K562 (cell line): ENCODE measurements at regions of chr2 and their contacts with region 1.

Region 1: GRCh38 chr2:108607706-108608301 is 73.5 kb downstream of the LIMS1 start:
- DNase-seq: peak; percentile 45 to 74 (median 46)
- ATAC-seq: peak; percentile 76
- H3K4me3 ChIP-seq: no peak overlapping the region
- H3K27ac ChIP-seq: no peak overlapping the region; the same call in 2 of the 3 replicates
- H3K4me1 ChIP-seq: peaks cover 15 to 26% of the 10 kb centered on the region in 2 experiments
- H3K27me3 ChIP-seq: no peaks in the 10 kb centered on the region
- CTCF ChIP-seq: peak; percentile 66 to 82 (median 76)
- EP300 ChIP-seq: no peak
- POLR2A ChIP-seq: no peak
- RAD21 ChIP-seq: peak; percentile 76 to 82

Region 2: GRCh38 chr2:107738266-107738665 is 869.5 kb before region 1 on chr2:
- CTCF ChIA-PET with region 1: no interaction called
- POLR2A ChIA-PET with region 1: no interaction called
- in situ Hi-C with region 1: no loop called
- intact Hi-C with region 1: loop called (anchors 10 kb)
- DNase-seq: no peak
- ATAC-seq: no peak
- H3K4me3 ChIP-seq: no peak overlapping the region
- H3K27ac ChIP-seq: no peak overlapping the region
- H3K4me1 ChIP-seq: peaks cover 0 to 29% of the 10 kb centered on the region in 2 experiments; a peak in 3 of 5 replicates
- H3K27me3 ChIP-seq: no peaks in the 10 kb centered on the region
- CTCF ChIP-seq: no peak
- EP300 ChIP-seq: no peak
- POLR2A ChIP-seq: peak; percentile 5; the same call in 1 of the 2 replicates
- RAD21 ChIP-seq: no peak

Region 3: GRCh38 chr2:108492364-108492763 is 115.4 kb before region 1 on chr2:
- CTCF ChIA-PET with region 1: no interaction called
- POLR2A ChIA-PET with region 1: no interaction called
- in situ Hi-C with region 1: no loop called
- intact Hi-C with region 1: no loop called
- DNase-seq: no peak
- ATAC-seq: no peak
- H3K4me3 ChIP-seq: no peak overlapping the region
- H3K27ac ChIP-seq: no peak overlapping the region
- H3K4me1 ChIP-seq: no peaks in the 10 kb centered on the region
- H3K27me3 ChIP-seq: no peaks in the 10 kb centered on the region
- CTCF ChIP-seq: no peak
- EP300 ChIP-seq: no peak
- POLR2A ChIP-seq: no peak
- RAD21 ChIP-seq: no peak

Region 4: GRCh38 chr2:108594132-108594981 is 13.4 kb before region 1 on chr2:
- CTCF ChIA-PET with region 1: no interaction called
- POLR2A ChIA-PET with region 1: interaction called, 10 read pairs
- in situ Hi-C with region 1: no loop called
- intact Hi-C with region 1: no loop called
- DNase-seq: peak in 1 of 4 experiments; percentile 64
- ATAC-seq: peak; percentile 24
- H3K4me3 ChIP-seq: no peak overlapping the region
- H3K27ac ChIP-seq: peak overlapping the region; percentile 94
- H3K4me1 ChIP-seq: peaks cover 12 to 55% of the 10 kb centered on the region in 2 experiments; a peak in 4 of 5 replicates
- H3K27me3 ChIP-seq: no peaks in the 10 kb centered on the region
- CTCF ChIP-seq: no peak
- EP300 ChIP-seq: peak; percentile 23; the same call in 1 of the 2 replicates
- POLR2A ChIP-seq: no peak
- RAD21 ChIP-seq: no peak; a peak in 1 of 4 replicates

Region 5: GRCh38 chr2:108630567-108631405 is 23.0 kb after region 1 on chr2:
- CTCF ChIA-PET with region 1: interaction called, 27 read pairs
- POLR2A ChIA-PET with region 1: interaction called, 5 read pairs
- in situ Hi-C with region 1: no loop called
- intact Hi-C with region 1: loop called (anchors 1 kb)
- DNase-seq: no peak
- ATAC-seq: peak; percentile 41; the same call in 2 of the 3 replicates
- H3K4me3 ChIP-seq: no peak overlapping the region
- H3K27ac ChIP-seq: no peak overlapping the region
- H3K4me1 ChIP-seq: peaks cover 0 to 19% of the 10 kb centered on the region in 2 experiments; a peak in 4 of 5 replicates
- H3K27me3 ChIP-seq: no peaks in the 10 kb centered on the region
- CTCF ChIP-seq: no peak
- EP300 ChIP-seq: no peak
- POLR2A ChIP-seq: no peak
- RAD21 ChIP-seq: no peak

Region 6: DNA sequence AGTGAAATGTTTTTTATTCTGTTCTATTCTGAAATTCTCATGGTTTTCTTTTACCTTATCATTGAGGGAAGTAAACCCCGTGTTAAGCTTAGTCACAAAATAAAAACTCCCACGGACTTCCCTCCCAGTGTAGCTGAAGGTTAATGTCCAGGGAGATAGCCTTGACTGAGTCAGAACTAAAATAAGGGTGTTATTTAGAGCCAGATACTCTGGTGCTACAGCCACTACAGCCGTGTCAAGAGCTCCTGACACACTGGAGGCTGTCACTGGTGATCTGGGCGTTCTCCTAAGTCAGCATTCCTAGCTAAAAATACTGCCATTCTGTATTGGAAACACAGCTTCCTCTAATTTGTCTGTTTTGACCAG is 29.5 kb after region 1 on chr2:
- CTCF ChIA-PET with region 1: interaction called, 27 read pairs
- POLR2A ChIA-PET with region 1: interaction called, 5 read pairs
- in situ Hi-C with region 1: no loop called
- intact Hi-C with region 1: loop called (anchors 1 kb)
- DNase-seq: peak; percentile 77 to 89 (median 80)
- ATAC-seq: peak; percentile 85
- H3K4me3 ChIP-seq: no peak overlapping the region
- H3K27ac ChIP-seq: peak overlapping the region; percentile 76
- H3K4me1 ChIP-seq: peaks cover 21 to 51% of the 10 kb centered on the region in 2 experiments
- H3K27me3 ChIP-seq: no peaks in the 10 kb centered on the region
- CTCF ChIP-seq: no peak
- EP300 ChIP-seq: peak; percentile 72; the same call in 1 of the 2 replicates
- POLR2A ChIP-seq: no peak
- RAD21 ChIP-seq: no peak

Region 7: DNA sequence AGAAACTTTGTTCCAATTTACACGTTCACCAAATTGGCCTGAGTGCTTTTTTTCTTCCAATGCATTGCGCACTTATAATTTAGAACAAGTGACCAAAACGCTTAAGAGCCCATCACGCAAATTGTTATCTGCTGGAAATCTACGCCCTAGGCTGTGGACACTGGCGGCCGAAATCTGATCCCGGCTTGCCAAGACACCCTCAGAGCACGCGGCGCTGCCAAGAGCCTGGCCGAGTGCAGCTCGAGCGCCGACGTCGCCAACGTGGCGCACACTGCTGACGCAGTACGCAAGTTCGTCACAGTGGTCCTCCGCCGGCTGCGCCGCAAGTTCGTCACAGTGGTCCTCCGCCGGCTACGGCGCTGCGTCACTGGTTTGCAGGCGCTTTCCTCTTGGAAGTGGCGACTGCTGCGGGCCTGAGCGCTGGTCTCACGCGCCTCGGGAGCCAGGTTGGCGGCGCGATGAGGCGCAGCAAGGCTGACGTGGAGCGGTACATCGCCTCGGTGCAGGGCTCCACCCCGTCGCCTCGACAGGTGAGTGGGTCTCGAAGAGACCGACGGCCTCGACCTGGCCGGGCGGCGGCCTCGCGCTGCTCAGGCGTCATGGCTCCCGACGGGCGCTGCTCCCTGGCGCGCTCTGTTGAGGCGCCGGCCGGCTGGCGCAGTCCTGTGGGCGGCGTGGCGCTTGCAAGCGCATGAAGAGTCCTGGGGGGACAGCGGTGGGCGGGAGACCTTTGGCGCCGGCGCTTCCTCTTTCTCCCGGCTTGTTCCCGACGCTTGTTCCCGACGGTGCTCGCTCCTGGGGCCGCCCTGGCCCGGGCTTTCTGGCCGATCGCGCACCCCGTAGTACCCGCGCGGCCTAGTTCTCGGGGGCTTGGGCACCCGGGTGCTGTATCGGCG is 111.6 kb after region 1 on chr2 and contains the start of gene RANBP2:
- CTCF ChIA-PET with region 1: no interaction called
- POLR2A ChIA-PET with region 1: no interaction called
- in situ Hi-C with region 1: no loop called
- intact Hi-C with region 1: loop called (anchors 10 kb)
- DNase-seq: peak; percentile 79 to 98 (median 82)
- ATAC-seq: peak; percentile 92
- H3K4me3 ChIP-seq: peak within 1 kb of the TSS; percentile 82
- H3K27ac ChIP-seq: peak within 1 kb of the TSS; percentile 95
- H3K4me1 ChIP-seq: peaks cover 7 to 12% of the 10 kb centered on the region in 2 experiments; a peak in 3 of 5 replicates
- H3K27me3 ChIP-seq: no peaks in the 10 kb centered on the region
- CTCF ChIP-seq: no peak
- EP300 ChIP-seq: peak; percentile 57
- POLR2A ChIP-seq: peak; percentile 92
- RAD21 ChIP-seq: no peak
- polyA plus RNA-seq, gene RANBP2: 11.7 to 11.9 TPM

Region 8: GRCh38 chr2:109079590-109079989 is 471.8 kb after region 1 on chr2:
- CTCF ChIA-PET with region 1: no interaction called
- POLR2A ChIA-PET with region 1: no interaction called
- in situ Hi-C with region 1: no loop called
- intact Hi-C with region 1: no loop called
- DNase-seq: no peak
- ATAC-seq: no peak
- H3K4me3 ChIP-seq: no peak overlapping the region
- H3K27ac ChIP-seq: no peak overlapping the region
- H3K4me1 ChIP-seq: no peaks in the 10 kb centered on the region
- H3K27me3 ChIP-seq: peaks cover 0 to 18% of the 10 kb centered on the region in 2 experiments; a peak in 2 of 5 replicates
- CTCF ChIP-seq: no peak
- EP300 ChIP-seq: no peak
- POLR2A ChIP-seq: no peak
- RAD21 ChIP-seq: no peak